ENCODE measurements at regions of chr10 and their contacts with region 1.

Region 1: DNA sequence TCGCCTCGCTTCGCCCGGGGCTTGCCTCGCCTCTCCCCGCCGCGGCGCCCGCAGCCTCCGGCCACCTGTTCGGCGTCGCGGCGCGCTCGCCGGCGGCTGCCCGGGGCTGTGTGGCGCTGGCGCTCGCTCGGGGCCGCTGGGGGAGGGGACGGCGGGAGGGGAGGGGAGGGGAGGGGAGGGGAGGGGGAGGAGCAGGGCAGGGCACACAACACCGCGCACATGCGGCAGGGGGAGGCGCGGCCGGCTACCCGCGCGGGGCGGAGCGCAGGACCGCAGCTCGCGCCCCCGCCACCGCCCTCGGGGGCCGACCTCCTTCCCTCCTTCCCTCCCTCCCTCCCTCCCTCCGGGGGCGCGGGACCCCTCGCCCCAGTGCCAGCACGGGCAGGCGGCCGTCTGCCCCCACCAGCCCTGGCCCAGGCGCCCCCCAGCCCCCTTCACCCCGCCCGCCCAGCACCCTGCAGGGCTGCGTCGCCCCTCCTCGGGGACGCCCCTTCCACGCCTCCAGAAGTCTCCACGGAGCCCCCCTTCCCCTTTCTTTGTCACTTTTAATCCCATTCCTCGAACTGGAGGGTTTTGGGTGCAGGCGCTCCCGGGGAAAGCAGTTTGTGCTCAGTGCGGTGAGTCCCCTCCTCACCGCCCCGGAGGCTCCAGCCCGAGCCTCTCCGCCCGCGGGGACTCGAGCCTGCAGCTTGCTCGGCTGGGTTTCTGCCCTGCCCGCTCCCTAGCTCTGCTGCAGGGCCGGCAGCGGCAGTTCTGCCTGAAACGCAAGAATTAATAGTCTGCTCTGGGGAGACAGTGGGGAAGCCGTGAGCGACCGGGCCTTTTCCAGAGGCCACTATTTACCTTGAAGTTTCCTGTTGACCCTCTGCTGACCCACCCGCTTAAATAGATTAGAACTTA is at the start of gene PARD3:
- DNase-seq: peak; percentile 71 to 89 (median 89)
- ATAC-seq: peak; percentile 78 to 81
- H3K4me3 ChIP-seq: peak within 1 kb of the TSS; percentile 99
- H3K27ac ChIP-seq: peak within 1 kb of the TSS; percentile 95
- H3K4me1 ChIP-seq: peaks cover 12% of the 10 kb centered on the region
- H3K27me3 ChIP-seq: no peaks in the 10 kb centered on the region
- total RNA-seq, gene PARD3: 27.3 to 40.3 (median 29.7) TPM

Region 2: GRCh38 chr10:34666008-34666705 is 149.3 kb before region 1 on chr10:
- intact Hi-C with region 1: loop called in 2 of 4 experiments (anchors 10 kb)
- DNase-seq: no peak
- ATAC-seq: peak; percentile 84 to 89
- H3K4me3 ChIP-seq: no peak overlapping the region
- H3K27ac ChIP-seq: no peak overlapping the region
- H3K4me1 ChIP-seq: peaks cover 2% of the 10 kb centered on the region
- H3K27me3 ChIP-seq: no peaks in the 10 kb centered on the region

Region 3: GRCh38 chr10:34723750-34724149 is 91.7 kb before region 1 on chr10:
- intact Hi-C with region 1: loop called in 3 of 4 experiments (anchors 10 kb)
- DNase-seq: peak in 1 of 3 donors; percentile 58
- ATAC-seq: peak; percentile 82
- H3K4me3 ChIP-seq: no peak overlapping the region
- H3K27ac ChIP-seq: no peak overlapping the region
- H3K4me1 ChIP-seq: peaks cover 5% of the 10 kb centered on the region
- H3K27me3 ChIP-seq: no peaks in the 10 kb centered on the region

Region 4: GRCh38 chr10:34773636-34774630 is 41.5 kb before region 1 on chr10:
- intact Hi-C with region 1: loop called in 2 of 4 experiments (anchors 5 kb)
- DNase-seq: no peak
- ATAC-seq: no peak
- H3K4me3 ChIP-seq: no peak overlapping the region
- H3K27ac ChIP-seq: no peak overlapping the region
- H3K4me1 ChIP-seq: peaks cover 11% of the 10 kb centered on the region
- H3K27me3 ChIP-seq: no peaks in the 10 kb centered on the region

Region 5: GRCh38 chr10:34826221-34826620 is 10.8 kb after region 1 on chr10:
- intact Hi-C with region 1: no loop called
- DNase-seq: no peak
- ATAC-seq: peak in 1 of 2 donors; percentile 19
- H3K4me3 ChIP-seq: no peak overlapping the region
- H3K27ac ChIP-seq: no peak overlapping the region
- H3K4me1 ChIP-seq: no peaks in the 10 kb centered on the region
- H3K27me3 ChIP-seq: no peaks in the 10 kb centered on the region